ENCODE measurements at regions of chr9 and their contacts with region 1.

Region 1: GRCh38 chr9:130860458-130861316 is 25.6 kb downstream of the ABL1 start:
- DNase-seq: peak; percentile 91 to 93 (median 91)
- ATAC-seq: peak; percentile 95 to 96
- H3K4me3 ChIP-seq: no peak overlapping the region
- H3K27ac ChIP-seq: peak overlapping the region; percentile 88
- H3K4me1 ChIP-seq: peaks cover 12% of the 10 kb centered on the region
- H3K27me3 ChIP-seq: no peaks in the 10 kb centered on the region

Region 2: GRCh38 chr9:130707225-130707976 is 153.3 kb before region 1 on chr9:
- intact Hi-C with region 1: loop called (anchors 5 kb)
- DNase-seq: peak in 2 of 3 donors; percentile 71 to 84
- ATAC-seq: peak in 1 of 2 donors; percentile 36
- H3K4me3 ChIP-seq: no peak overlapping the region
- H3K27ac ChIP-seq: no peak overlapping the region
- H3K4me1 ChIP-seq: no peaks in the 10 kb centered on the region
- H3K27me3 ChIP-seq: no peaks in the 10 kb centered on the region

Region 3: GRCh38 chr9:130712564-130713285 is 148.0 kb before region 1 on chr9:
- intact Hi-C with region 1: loop called in 2 of 4 experiments (anchors 5 kb)
- DNase-seq: peak; percentile 99 to 100 (median 99)
- ATAC-seq: peak; percentile 98
- H3K4me3 ChIP-seq: peak overlapping the region; percentile 91
- H3K27ac ChIP-seq: peak overlapping the region; percentile 92
- H3K4me1 ChIP-seq: peaks cover 3% of the 10 kb centered on the region
- H3K27me3 ChIP-seq: no peaks in the 10 kb centered on the region

Region 4: GRCh38 chr9:130770679-130771442 is 89.8 kb before region 1 on chr9:
- intact Hi-C with region 1: loop called (anchors 5 to 10 kb)
- DNase-seq: no peak
- ATAC-seq: peak; percentile 56 to 72
- H3K4me3 ChIP-seq: no peak overlapping the region
- H3K27ac ChIP-seq: no peak overlapping the region
- H3K4me1 ChIP-seq: peaks cover 7% of the 10 kb centered on the region
- H3K27me3 ChIP-seq: no peaks in the 10 kb centered on the region

Region 5: GRCh38 chr9:130918870-130919558 is 58.3 kb after region 1 on chr9:
- intact Hi-C with region 1: no loop called
- DNase-seq: no peak
- ATAC-seq: no peak
- H3K4me3 ChIP-seq: no peak overlapping the region
- H3K27ac ChIP-seq: no peak overlapping the region
- H3K4me1 ChIP-seq: no peaks in the 10 kb centered on the region
- H3K27me3 ChIP-seq: no peaks in the 10 kb centered on the region